ENCODE measurements at regions of chr22 and their contacts with region 1.

Region 1: DNA sequence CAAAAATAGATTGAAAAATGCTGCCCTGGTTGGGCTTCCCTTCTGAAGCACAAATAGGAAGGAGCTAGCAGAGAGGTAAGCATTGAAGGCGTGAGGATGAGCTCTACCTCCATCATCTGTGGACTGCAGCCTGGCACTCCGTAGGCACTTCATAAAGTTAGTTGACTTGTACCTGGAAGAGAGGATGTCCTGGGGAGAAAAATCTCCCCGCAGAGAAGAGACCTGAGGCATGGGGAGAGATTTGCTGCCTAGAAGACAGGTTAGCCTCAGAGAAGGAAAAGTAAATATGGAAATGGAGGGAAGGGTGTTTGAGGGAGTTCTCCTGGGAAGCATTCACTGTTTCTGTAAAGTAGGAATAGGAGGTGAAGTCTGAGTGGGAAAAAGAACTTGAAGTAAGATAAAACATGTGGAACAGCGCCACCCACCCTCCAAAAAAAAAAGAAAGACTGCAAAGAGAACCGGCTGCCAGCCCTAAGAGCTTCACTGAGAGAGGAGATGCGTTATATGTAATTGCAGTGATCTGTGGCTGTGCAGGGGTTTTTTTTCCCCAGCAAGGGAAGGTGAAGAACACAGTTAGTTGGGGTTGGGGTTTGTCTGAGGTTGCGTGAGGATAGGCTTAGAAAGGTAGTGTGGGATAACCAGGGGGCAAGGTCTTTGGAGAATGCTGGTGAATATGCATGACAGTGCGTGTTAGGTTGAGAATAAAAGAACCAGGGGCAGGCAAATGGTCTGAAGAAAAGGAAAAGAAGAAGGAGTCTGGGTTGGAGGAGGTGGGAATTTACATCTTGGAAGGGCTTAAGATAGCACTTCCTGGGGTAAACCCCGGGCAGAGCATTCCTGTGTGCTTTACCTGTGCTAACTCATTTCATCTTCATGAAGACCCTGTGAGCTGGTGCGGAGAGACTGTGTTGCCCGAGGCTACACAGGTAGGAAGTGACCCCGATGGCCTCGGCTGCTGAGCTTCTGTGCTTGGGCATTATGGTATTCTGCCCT is 16.0 kb downstream of the TNRC6B start:
- DNase-seq: peak; percentile 31
- ATAC-seq: no peak
- H3K4me3 ChIP-seq: no peak overlapping the region
- H3K27ac ChIP-seq: no peak overlapping the region
- H3K4me1 ChIP-seq: peaks cover 33% of the 10 kb centered on the region
- H3K27me3 ChIP-seq: no peaks in the 10 kb centered on the region
- CTCF ChIP-seq: peak; percentile 62

Region 2: GRCh38 chr22:40044102-40044869 is 149.4 kb before region 1 on chr22:
- CTCF ChIA-PET with region 1: no interaction called
- POLR2A ChIA-PET with region 1: interaction called, 4 read pairs
- intact Hi-C with region 1: loop called (anchors 5 kb)
- DNase-seq: peak; percentile 96
- ATAC-seq: peak; percentile 85
- H3K4me3 ChIP-seq: peak overlapping the region; percentile 72
- H3K27ac ChIP-seq: peak overlapping the region; percentile 61
- H3K4me1 ChIP-seq: peaks cover 24% of the 10 kb centered on the region
- H3K27me3 ChIP-seq: no peaks in the 10 kb centered on the region
- CTCF ChIP-seq: no peak